PC-9 (cell line): ENCODE measurements at regions of chr12 and their contacts with region 1.

Region 1: DNA sequence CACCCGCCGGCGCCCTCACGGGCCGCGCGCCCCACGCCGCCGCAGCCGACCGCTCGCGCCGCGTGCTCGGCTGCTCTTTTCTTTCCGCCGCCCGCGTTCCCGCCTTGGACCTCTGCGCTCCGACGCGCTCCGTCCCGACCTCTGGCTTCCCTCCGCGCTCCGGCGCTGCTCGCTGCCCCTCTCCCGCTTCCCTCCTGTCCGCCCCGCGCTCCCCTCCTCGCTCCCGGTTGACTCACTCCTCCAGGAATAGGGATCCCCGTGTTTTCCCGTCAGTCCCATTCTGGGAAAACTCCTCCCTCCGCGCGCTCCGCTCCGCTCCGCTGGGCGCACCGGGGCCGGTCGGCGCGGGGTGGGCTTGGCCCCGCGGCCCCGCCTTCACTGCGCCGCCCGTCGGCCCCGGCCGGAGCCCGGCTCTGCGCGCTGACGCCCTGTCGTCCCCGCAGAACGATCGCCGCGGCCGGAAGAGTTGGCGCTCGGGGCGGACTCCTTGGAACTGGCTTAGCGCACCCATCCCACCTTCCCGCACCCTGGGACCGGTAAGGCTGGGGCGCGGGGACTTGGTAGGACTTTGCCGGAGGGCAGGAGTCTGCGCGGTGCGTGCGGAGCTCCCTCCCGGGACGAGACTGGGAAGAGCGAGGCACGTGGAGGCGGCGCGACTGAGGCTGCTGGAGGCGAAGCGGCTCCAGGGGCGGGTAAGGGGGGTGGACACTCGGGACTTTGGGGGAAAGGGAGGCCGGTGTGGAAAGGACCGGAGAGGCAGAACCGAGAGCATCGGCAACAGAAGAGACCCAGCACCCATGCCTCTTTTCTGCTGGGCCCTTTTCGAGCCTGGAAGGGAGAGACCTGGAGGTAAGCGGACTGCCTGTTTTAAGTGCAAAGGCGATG is 550 bp downstream of the TEAD4 start:
- DNase-seq: peak; percentile 41 to 67
- H3K4me3 ChIP-seq: peak overlapping the region; percentile 83
- H3K27ac ChIP-seq: peak overlapping the region; percentile 53
- H3K4me1 ChIP-seq: peaks cover 33% of the 10 kb centered on the region
- H3K27me3 ChIP-seq: no peaks in the 10 kb centered on the region
- CTCF ChIP-seq: no peak

Region 2: DNA sequence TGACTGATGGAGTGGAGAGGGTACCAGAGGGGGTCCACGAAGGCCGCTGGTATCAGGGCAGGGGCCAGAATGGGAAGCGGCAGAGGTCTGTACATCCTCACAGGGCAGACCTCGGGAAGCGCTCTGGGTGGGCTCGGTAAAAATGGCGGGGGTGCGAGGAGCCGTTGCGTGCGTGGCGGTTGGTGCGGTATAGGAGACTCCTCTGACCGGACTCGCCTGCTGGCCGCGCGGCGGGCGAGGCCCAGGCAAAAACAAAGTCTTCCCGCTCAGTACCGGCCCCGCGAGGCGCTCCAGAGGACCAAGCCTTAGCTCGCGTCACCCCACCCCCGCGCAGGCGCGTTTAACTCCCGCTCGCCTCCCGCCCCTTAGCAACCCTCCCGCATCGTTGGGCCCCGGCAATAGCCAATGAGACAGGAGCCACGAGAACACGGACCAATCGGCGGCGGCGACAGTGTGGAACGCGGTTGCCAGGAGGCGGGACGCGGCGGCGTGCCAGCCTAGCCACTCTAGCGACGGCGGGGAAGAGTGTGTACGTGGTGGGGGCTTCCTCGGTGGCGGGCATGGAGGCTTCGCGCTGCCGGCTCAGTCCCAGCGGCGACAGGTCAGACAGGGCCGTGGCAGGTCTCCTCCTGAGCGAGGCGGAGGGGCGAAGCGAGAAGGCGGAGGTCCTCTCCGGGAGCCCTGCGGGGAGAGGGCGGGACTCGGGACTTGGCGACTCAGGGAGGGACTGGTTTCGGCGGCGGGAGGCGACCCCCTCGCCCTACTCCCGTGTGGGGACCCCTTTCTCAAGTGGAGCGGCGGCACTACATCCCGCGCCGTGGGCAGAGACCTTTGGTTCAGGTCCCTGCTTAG is 69.1 kb before region 1 on chr12 and contains the start of gene TULP3:
- CTCF ChIA-PET with region 1: interaction called, 3 read pairs
- POLR2A ChIA-PET with region 1: no interaction called
- intact Hi-C with region 1: loop called (anchors 2 kb)
- DNase-seq: peak; percentile 93 to 99
- H3K4me3 ChIP-seq: peak within 1 kb of the TSS; percentile 80
- H3K27ac ChIP-seq: peak within 1 kb of the TSS; percentile 74
- H3K4me1 ChIP-seq: peaks cover 35% of the 10 kb centered on the region
- H3K27me3 ChIP-seq: no peaks in the 10 kb centered on the region
- CTCF ChIP-seq: no peak
- total RNA-seq, gene TULP3: 39.0 and 54.6 TPM in 2 replicates